ENCODE measurements at regions of chr22 and their contacts with region 1.

Region 1: DNA sequence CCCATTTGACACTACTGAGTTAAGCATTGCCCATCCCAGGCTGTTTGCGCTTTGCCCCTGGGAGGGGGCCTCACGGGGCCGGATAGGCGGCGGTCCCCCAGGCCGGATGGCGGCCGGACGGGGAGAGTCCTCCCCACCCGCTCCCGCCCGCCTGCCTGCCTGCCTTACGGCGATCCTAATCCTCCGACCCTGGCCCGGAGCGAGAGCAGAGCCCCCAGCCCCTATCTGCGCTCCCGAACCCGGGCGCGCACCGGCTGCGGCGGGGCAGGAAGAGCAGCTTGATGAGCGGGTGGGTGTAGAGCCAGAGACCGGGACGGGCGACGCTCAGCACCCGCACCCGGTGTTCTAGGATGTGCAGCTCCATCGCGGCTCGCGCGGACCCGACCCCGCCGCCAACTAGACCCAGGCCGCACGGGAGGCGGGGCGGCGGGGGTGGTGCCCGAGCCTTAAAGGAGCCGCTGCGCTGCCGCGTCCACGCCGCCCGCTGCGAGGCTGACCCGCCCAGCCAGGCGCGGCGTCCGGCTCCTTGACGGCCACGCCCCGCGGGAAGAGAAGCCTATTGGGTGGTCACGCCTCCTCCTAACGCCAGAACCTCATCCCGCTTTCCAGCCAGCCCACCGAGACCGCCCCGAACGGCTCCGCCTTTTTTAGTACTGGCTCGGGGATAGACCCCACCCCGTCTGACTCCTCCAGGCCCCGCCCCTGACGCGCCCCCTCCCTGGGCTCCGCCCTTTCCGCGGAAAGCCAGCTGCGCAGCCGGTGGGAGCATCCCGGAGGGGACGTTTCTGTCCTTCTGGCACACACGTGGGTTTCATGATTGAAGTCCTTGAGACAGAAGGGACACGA is at the start of gene CASTOR1:
- DNase-seq: peak; percentile 91
- H3K4me3 ChIP-seq: peak within 1 kb of the TSS; percentile 71
- H3K27me3 ChIP-seq: no peaks in the 10 kb centered on the region
- CTCF ChIP-seq: no peak
- polyA plus RNA-seq, gene CASTOR1: 7.7 and 16.4 TPM in 2 replicates

Region 2: DNA sequence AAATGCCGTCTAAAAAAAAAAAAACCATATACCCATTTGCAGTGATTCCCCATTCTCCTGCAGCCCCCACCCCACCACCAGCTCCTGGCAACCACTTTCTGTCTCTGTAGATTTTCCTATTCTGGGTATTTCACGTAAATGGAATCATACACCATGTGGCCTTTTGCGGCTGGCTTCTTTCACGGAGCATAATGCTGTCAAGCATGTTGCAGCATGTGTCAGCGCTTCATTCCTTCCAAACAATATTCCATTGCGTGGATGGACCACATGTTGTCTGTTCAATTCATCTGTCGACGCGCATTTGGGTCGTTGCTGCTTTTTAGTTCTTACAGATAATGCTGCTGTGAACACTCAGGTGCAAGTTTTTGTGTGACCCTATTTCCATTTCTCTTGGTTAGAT is 1098.4 kb before region 1 on chr22:
- CTCF ChIA-PET with region 1: no interaction called
- POLR2A ChIA-PET with region 1: no interaction called
- DNase-seq: no peak
- H3K4me3 ChIP-seq: no peak overlapping the region
- H3K27me3 ChIP-seq: peaks cover 1% of the 10 kb centered on the region
- CTCF ChIP-seq: no peak

Region 3: GRCh38 chr22:30253205-30253852 is 36.0 kb before region 1 on chr22:
- CTCF ChIA-PET with region 1: interaction called, 15 read pairs
- POLR2A ChIA-PET with region 1: no interaction called
- DNase-seq: no peak
- H3K4me3 ChIP-seq: no peak overlapping the region
- H3K27me3 ChIP-seq: no peaks in the 10 kb centered on the region
- CTCF ChIP-seq: no peak

Region 4: GRCh38 chr22:30277547-30278344 is 11.6 kb before region 1 on chr22:
- CTCF ChIA-PET with region 1: interaction called, 14 read pairs
- POLR2A ChIA-PET with region 1: no interaction called
- DNase-seq: no peak
- H3K4me3 ChIP-seq: no peak overlapping the region
- H3K27me3 ChIP-seq: peaks cover 5% of the 10 kb centered on the region
- CTCF ChIP-seq: no peak

Region 5: DNA sequence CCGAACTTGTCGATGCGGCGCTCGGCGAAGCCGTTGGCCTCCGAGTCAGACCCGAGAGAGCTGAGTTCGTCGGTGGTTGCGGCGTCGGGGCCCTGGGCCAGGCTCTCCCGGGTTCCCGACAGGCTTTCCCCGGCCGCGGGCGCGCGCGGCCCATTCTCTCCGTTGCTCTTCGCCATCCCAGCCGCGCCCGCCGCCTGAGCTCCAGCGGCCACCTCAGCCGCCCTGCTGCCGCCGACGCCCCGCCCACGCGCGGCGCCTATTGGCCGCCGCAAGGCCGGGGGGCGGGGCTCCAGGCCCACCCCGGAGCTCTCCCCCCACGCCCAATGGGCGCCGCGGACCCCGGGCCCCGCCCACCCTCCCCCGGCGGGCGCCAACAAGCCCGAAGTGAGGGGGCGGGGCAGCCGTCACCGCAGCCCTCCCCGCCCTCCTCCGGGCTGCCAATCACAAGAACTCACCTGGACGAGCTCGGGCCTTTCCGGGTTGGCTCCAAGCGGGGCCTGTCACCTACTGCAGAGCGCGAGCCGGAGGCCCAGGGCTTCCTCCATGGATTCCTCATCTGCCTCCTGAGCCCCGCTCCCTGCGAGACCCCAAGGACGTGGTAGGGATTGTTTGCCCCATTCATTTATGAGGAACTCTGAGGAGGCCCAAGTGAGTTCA is 37.5 kb after region 1 on chr22 and contains the start of gene TBC1D10A:
- CTCF ChIA-PET with region 1: interaction called, 50 read pairs
- POLR2A ChIA-PET with region 1: no interaction called
- DNase-seq: no peak
- H3K4me3 ChIP-seq: peak within 1 kb of the TSS; percentile 83
- H3K27me3 ChIP-seq: no peaks in the 10 kb centered on the region
- CTCF ChIP-seq: no peak
- polyA plus RNA-seq, gene TBC1D10A: 13.6 and 22.1 TPM in 2 replicates

Region 6: GRCh38 chr22:30356449-30357235 is 67.3 kb after region 1 on chr22 and contains the starts of genes CCDC157 and SF3A1:
- CTCF ChIA-PET with region 1: interaction called, 16 read pairs
- POLR2A ChIA-PET with region 1: no interaction called
- DNase-seq: peak; percentile 42
- H3K4me3 ChIP-seq: peak within 1 kb of the TSS; percentile 85
- H3K27me3 ChIP-seq: no peaks in the 10 kb centered on the region
- CTCF ChIP-seq: no peak
- polyA plus RNA-seq, gene CCDC157: 1.3 and 1.6 TPM in 2 replicates
- polyA plus RNA-seq, gene SF3A1: 43.2 and 66.8 TPM in 2 replicates

Region 7: DNA sequence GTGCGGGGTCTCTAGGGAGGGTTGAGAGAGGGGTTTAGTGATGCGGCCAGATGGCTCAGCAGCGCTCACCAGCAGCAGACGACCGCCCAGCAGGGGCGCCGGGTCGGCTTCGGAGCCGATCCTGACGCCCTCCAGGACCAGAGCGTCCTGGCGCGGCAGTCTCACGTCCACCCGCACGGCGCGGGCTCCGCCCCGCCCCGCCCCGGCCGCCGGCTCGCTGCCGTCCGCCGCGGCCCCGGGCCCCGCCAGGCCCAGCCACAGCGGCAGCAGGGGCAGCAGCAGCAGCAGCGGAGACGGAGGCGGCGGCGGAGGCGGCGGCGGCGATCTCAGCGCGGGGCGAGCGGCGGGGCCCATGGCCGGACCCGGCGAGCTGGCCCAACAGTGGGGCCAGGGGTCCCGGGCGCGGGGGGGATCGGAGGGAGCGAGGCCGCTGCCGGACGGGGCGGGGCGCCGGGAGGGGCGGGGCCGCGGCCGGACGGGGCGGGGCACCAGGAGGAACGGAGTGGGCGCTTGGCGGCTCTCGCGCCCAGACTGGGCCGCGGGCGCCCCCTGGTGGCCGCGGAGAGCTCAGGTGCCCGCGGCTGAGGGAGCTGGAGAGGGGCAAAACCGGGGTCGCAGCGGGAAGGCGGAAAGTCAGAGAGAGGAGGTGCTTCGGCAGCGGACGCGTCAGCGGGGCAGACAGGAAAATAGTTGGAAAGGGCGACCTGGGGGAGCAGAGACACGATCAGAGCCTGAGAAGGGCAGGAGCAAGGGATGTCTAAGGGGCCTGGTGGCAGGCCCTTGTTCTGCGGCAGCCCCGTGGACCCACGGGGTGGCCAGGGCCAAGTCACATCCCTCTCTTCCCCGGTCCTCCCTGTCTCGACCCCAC is 97.8 kb after region 1 on chr22 and contains the start of gene RNF215:
- CTCF ChIA-PET with region 1: interaction called, 204 read pairs
- POLR2A ChIA-PET with region 1: no interaction called
- DNase-seq: no peak
- H3K4me3 ChIP-seq: peak within 1 kb of the TSS; percentile 76
- H3K27me3 ChIP-seq: no peaks in the 10 kb centered on the region
- CTCF ChIP-seq: peak; percentile 82
- polyA plus RNA-seq, gene RNF215: 11.1 and 15.8 TPM in 2 replicates

Region 8: DNA sequence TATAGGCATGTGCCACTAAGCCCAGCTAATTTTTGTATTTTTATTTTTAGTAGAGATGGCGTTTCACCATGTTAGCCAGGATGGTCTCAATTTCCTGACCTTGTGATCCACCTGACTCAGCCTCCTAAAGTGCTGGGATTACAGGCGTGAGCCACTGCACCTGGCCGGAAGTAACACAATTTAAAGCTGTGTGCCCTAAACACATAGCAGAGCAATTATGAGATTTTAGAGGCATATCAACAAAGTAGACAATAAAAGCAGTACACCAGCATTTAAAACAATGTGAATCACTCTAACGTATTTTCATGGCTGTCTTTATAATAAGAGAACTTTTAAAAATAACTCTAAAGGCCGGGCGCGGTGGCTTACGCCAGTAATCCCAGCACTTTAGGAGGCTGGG is 1418.2 kb after region 1 on chr22:
- CTCF ChIA-PET with region 1: no interaction called
- POLR2A ChIA-PET with region 1: interaction called, 15 read pairs
- DNase-seq: no peak
- H3K4me3 ChIP-seq: no peak overlapping the region
- H3K27me3 ChIP-seq: no peaks in the 10 kb centered on the region
- CTCF ChIP-seq: no peak

Measured in BJ (cell line).